ENCODE measurements at regions of chr5 and their contacts with region 1.

Region 1: DNA sequence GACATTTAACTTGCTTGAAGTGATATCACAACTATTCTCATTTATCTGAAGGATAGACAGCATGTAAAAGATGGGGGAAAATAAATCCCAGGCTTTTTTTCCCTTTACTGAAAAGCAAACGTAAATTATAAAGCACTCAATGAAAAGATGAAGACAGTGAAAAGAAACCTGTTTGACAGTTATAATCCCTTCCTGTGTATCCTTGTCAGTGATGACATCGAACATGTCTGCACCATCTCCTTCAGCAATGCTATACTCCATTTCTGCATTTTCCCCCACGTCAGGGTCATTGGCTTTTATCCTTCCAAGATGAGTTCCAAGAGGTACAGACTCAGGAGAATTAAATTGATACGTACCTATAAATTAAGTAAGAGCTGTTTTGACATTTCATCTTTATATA is 134.9 kb downstream of the CDH9 start:
- DNase-seq: no peak
- ATAC-seq: no peak

Region 2: DNA sequence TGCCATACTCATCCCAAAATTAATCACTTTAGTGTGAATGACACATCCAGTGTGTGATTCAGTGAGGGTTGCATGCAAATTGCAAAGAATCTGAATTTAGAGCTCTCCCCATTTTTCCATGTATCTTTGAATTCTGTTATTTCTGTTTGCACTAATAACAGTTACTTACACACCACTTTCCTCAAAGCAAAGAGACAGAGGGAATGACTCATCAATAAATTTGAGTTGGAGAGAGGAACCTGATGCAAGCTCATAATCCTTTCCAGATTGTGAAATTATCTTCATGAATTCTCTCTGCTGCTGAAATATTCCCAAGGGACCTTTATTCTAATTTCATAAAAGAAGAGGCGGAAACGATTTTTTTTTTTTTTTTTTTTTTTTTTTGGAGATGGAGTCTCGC is 69.9 kb before region 1 on chr5:
- intact Hi-C with region 1: loop called (anchors 2 kb)
- DNase-seq: no peak
- ATAC-seq: no peak